ENCODE measurements at regions of chr11 and their contacts with region 1.

Region 1: DNA sequence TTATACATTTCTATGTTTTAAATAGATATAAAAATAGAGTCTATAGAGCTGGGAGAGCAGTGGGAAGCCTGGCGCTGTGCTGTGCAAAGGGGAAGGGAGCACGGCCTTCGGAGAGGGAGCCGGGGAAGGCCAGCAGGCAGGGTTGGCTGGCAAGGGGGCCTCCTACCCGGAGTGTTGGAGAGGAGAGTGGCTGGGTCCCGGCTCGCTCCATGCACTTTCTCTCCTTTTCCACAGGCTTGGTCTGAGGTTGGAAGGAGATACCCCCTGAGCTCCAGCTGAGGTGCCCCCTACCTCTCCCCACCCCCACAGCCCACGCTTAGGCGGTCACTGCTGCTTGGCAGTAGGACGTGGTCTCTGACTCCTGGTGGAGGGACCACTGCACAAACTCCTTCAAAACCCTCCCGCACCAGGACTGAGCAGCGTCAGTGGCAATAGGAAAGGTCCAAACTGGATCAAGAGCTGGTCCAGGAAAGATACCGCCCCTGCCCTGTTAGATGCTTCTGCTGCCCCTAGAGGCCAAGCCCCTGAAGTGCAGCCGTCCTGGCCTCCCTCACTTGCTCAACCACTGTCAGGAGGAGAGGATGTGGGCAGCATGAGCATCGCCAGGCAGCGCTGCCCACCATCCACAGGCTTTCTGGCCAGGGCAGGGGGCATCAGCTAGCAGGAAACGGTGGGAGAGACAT is 52.9 kb downstream of the SYT13 start:
- DNase-seq: peak; percentile 70
- H3K4me3 Mint-ChIP-seq: no peak overlapping the region
- H3K27ac Mint-ChIP-seq: no peak overlapping the region
- H3K4me1 Mint-ChIP-seq: no peaks in the 10 kb centered on the region
- H3K27me3 Mint-ChIP-seq: peaks cover 37% of the 10 kb centered on the region
- CTCF ChIP-seq: peak; percentile 83

Region 2: DNA sequence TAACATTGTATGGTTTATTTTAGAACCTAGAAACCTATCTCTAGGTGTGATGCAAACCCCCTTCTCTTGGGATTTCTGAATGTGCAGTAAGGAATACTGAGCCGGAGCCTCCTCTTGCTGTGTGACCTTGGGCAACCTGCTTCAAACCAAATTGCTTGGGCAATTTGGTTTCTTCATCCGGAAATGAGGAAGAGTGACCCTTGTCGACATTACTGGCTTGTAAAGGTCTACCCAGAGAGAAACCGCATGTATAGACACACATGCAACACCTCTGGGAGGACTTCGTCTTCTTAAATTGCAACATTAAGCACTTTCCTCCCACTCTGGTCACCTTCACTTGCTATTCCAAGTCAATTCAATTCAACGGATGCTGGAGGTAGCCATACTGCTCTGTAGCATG is 263.0 kb before region 1 on chr11:
- CTCF ChIA-PET with region 1: no interaction called
- POLR2A ChIA-PET with region 1: no interaction called
- intact Hi-C with region 1: no loop called
- DNase-seq: no peak
- H3K4me3 Mint-ChIP-seq: no peak overlapping the region
- H3K27ac Mint-ChIP-seq: no peak overlapping the region
- H3K4me1 Mint-ChIP-seq: no peaks in the 10 kb centered on the region
- H3K27me3 Mint-ChIP-seq: no peaks in the 10 kb centered on the region
- CTCF ChIP-seq: no peak

Region 3: GRCh38 chr11:45147017-45147728 is 86.1 kb before region 1 on chr11:
- CTCF ChIA-PET with region 1: no interaction called
- POLR2A ChIA-PET with region 1: no interaction called
- intact Hi-C with region 1: no loop called
- DNase-seq: peak; percentile 96
- H3K4me3 Mint-ChIP-seq: peak overlapping the region; percentile 85
- H3K27ac Mint-ChIP-seq: peak overlapping the region; percentile 96
- H3K4me1 Mint-ChIP-seq: peaks cover 11% of the 10 kb centered on the region
- H3K27me3 Mint-ChIP-seq: no peaks in the 10 kb centered on the region
- CTCF ChIP-seq: no peak

Region 4: GRCh38 chr11:45245218-45246045 is 12.2 kb after region 1 on chr11:
- CTCF ChIA-PET with region 1: interaction called, 29 read pairs
- POLR2A ChIA-PET with region 1: no interaction called
- intact Hi-C with region 1: no loop called
- DNase-seq: no peak
- H3K4me3 Mint-ChIP-seq: no peak overlapping the region
- H3K27ac Mint-ChIP-seq: no peak overlapping the region
- H3K4me1 Mint-ChIP-seq: no peaks in the 10 kb centered on the region
- H3K27me3 Mint-ChIP-seq: no peaks in the 10 kb centered on the region
- CTCF ChIP-seq: no peak